H1 (cell line): ENCODE measurements at regions of chr9 and their contacts with region 1.

Region 1: DNA sequence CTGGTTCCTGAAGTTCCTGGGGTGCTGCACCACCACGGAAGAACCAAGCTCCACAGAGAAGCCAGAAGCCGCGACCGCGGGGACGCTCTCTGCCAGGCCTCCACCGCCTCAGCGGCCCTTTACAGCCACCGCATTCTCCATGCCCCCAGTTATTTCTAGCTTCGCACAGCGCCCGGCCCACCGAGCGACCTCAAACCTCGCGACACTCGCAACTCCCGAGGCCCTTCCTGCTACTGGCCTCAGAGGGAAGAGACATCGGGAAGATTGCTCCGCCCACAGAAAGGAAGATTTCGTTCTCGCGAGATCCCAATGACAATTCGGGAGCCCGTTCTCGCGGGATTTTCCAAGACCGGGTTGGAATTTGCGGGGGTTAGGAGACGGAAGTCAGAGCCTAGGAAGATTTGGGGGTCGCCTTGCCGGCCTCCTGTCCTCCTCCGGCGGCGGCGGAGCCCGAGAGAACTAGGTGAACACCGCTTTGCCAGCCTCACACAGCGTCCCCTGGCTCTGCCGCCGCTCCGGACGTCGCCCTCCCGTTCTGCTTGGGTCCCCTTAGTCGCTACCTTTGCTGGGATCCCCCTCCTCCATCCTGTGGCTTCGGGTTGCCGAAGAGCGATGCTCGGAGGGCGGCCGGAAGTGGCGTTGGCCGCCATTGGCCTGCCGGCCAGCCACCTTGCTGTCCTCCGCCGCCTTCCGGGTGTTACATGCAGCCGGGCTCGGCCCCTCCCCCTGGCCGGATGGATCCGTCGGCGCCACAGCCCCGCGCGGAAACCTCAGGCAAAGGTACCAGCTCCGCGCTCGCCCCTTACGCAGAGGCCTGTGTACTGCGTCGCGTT is at the start of gene ERCC6L2:
- DNase-seq: peak; percentile 94 to 98
- H3K4me3 ChIP-seq: no peak within 1 kb of the TSS; a peak in 3 of 8 replicates
- H3K27ac ChIP-seq: peak within 1 kb of the TSS; percentile 99
- H3K4me1 ChIP-seq: peaks cover 0 to 4% (median 0%) of the 10 kb centered on the region in 4 experiments; a peak in 3 of 7 replicates
- H3K27me3 ChIP-seq: no peaks in the 10 kb centered on the region
- CTCF ChIP-seq: peak in 1 of 3 experiments; percentile 1; a peak in 1 of 4 replicates
- EP300 ChIP-seq: peak in 1 of 2 experiments; percentile 76; a peak in 1 of 3 replicates
- POLR2A ChIP-seq: peak; percentile 99
- RAD21 ChIP-seq: peak in 1 of 2 experiments; percentile 35; a peak in 2 of 4 replicates
- total RNA-seq, gene ERCC6L2: 47.7 and 50.0 TPM in 2 replicates

Region 2: DNA sequence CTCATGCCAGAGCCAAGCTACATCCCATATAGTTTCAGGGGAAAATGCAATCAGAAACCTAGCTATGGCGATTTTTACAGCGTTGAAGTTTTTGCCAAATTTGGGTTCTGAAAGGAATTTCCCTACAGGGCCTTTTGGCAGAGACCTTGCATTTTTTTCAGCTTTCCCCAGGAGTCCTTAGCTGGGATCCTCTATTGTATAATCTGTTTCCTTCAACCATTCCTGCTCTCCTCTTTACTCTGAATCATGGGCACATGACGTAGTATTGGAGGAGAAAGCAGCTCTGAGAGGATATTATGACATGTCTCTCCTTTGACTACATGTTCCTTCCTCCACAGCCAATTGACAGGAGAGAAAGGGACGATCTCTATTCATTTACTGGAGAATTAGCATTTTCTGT is 118.5 kb before region 1 on chr9:
- CTCF ChIA-PET with region 1: no interaction called
- POLR2A ChIA-PET with region 1: interaction called, 21 read pairs
- DNase-seq: no peak
- H3K4me3 ChIP-seq: no peak overlapping the region
- H3K27ac ChIP-seq: no peak overlapping the region
- H3K4me1 ChIP-seq: peaks cover 24 to 45% (median 27%) of the 10 kb centered on the region in 4 experiments
- H3K27me3 ChIP-seq: peaks cover 0 to 30% (median 19%) of the 10 kb centered on the region in 4 experiments; a peak in 5 of 7 replicates
- CTCF ChIP-seq: no peak
- EP300 ChIP-seq: no peak
- POLR2A ChIP-seq: no peak
- RAD21 ChIP-seq: no peak

Region 3: DNA sequence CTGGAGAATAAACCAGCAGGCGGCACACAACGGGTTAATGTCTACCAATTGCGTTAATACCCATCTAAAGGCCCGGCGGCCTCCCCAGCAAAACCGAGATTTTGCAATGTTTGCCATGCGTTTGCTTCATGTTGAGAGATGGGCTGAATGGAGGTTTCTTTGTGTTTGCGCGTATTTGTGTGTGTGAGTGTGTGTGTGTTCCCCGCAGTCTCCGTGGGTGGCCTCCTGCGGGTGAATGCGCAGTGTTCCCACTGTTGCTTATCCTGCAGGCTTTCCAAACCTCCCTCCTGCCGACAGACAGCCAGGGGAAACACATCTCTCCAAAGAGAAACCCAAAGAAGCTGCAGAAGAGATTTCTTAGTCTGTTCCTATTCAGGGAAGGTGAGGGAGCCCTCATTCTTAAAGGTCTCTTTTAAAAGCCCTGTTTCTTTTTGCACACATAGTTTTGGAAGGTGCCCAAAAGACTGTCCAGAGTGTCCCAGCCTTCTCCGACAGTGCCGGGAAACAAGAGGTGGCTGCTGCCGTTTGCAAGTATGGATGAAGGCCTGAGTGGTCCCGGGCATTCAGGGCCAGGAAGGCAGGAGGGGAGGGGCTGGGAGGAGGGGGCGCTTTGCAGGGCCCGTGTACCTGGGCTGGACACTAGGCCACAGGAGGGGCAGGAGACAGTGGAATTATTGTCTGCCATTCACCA is 103.8 kb before region 1 on chr9:
- CTCF ChIA-PET with region 1: no interaction called
- POLR2A ChIA-PET with region 1: interaction called, 12 read pairs
- DNase-seq: no peak
- H3K4me3 ChIP-seq: peak overlapping the region in 3 of 4 experiments; percentile 30 to 47 (median 37); a peak in 4 of 8 replicates
- H3K27ac ChIP-seq: no peak overlapping the region
- H3K4me1 ChIP-seq: peaks cover 13 to 27% (median 19%) of the 10 kb centered on the region in 4 experiments
- H3K27me3 ChIP-seq: peaks cover 0 to 8% (median 3%) of the 10 kb centered on the region in 4 experiments; a peak in 2 of 7 replicates
- CTCF ChIP-seq: no peak
- EP300 ChIP-seq: no peak
- POLR2A ChIP-seq: no peak
- RAD21 ChIP-seq: no peak

Region 4: DNA sequence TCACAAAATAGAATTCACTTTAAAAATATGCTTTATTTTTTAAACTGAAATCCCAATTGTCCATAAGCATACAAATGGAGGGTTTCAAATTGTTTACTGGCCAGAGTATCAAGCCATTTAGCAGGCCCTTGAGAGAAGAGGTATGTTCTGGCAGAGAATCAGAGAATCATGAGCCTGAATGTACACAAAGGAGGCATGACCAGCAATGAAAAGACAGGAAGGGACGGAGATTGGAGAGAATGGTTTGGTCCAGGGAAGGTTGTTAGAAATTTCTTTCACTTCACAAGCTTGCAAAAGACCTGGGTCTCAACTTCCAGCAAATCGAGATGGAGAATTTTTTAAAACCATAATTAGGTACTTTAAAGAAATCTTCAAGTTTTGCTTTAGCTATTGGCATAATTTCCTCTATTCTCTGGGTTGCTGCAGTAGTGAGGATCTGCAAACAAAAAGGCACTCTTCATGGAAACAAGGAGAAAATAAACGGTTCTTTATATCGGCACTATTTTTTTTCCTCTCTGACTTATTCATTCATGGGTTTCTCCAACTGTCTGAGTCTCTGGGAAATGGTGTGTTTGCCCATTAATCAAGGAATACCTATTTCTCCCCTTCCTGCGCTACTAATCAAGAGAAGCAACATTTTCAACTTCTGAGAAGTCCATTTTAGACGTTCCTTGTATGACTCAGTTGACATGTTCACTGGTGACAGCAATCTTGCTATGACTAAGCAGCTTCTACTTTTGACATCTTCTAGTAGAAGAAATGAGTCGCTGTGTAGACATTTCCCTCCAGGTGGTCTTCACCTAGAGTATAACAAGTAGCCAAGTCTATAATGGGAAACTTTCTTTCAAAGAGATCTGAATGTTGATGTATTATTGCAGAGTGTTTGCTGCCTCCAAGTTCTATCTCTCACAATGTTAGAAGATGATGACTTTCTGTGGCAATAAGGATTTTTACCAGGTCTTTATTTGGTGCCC is 23.2 kb before region 1 on chr9:
- CTCF ChIA-PET with region 1: interaction called, 4 read pairs
- POLR2A ChIA-PET with region 1: interaction called, 22 read pairs
- DNase-seq: no peak
- H3K4me3 ChIP-seq: no peak overlapping the region
- H3K27ac ChIP-seq: no peak overlapping the region
- H3K4me1 ChIP-seq: peaks cover 0 to 3% (median 0%) of the 10 kb centered on the region in 4 experiments; a peak in 1 of 7 replicates
- H3K27me3 ChIP-seq: no peaks in the 10 kb centered on the region
- CTCF ChIP-seq: no peak
- EP300 ChIP-seq: no peak
- POLR2A ChIP-seq: no peak
- RAD21 ChIP-seq: no peak

Region 5: GRCh38 chr9:95864852-95865580 is 10.5 kb before region 1 on chr9:
- CTCF ChIA-PET with region 1: no interaction called
- POLR2A ChIA-PET with region 1: interaction called, 22 read pairs
- DNase-seq: no peak
- H3K4me3 ChIP-seq: no peak overlapping the region
- H3K27ac ChIP-seq: no peak overlapping the region
- H3K4me1 ChIP-seq: no peaks in the 10 kb centered on the region
- H3K27me3 ChIP-seq: no peaks in the 10 kb centered on the region
- CTCF ChIP-seq: no peak
- EP300 ChIP-seq: no peak
- POLR2A ChIP-seq: no peak
- RAD21 ChIP-seq: no peak

Region 6: GRCh38 chr9:95887926-95888497 is 12.5 kb after region 1 on chr9:
- CTCF ChIA-PET with region 1: interaction called, 3 read pairs
- POLR2A ChIA-PET with region 1: interaction called, 19 read pairs
- DNase-seq: no peak
- H3K4me3 ChIP-seq: no peak overlapping the region
- H3K27ac ChIP-seq: no peak overlapping the region
- H3K4me1 ChIP-seq: no peaks in the 10 kb centered on the region
- H3K27me3 ChIP-seq: no peaks in the 10 kb centered on the region
- CTCF ChIP-seq: no peak
- EP300 ChIP-seq: no peak
- POLR2A ChIP-seq: no peak
- RAD21 ChIP-seq: no peak

Region 7: GRCh38 chr9:95953986-95954385 is 78.5 kb after region 1 on chr9:
- CTCF ChIA-PET with region 1: no interaction called
- POLR2A ChIA-PET with region 1: no interaction called
- DNase-seq: no peak
- H3K4me3 ChIP-seq: no peak overlapping the region
- H3K27ac ChIP-seq: no peak overlapping the region
- H3K4me1 ChIP-seq: no peaks in the 10 kb centered on the region
- H3K27me3 ChIP-seq: no peaks in the 10 kb centered on the region
- CTCF ChIP-seq: no peak
- EP300 ChIP-seq: no peak
- POLR2A ChIP-seq: no peak
- RAD21 ChIP-seq: no peak